Activated CD4-positive, alpha-beta T cell treated with anti-CD3 and anti-CD28 coated beads for 36 hours (primary cell): ENCODE measurements at regions of chrX and their contacts with region 1.

Region 1: GRCh38 chrX:45769761-45770582 is 569.3 kb upstream of the DIPK2B start:
- DNase-seq: peak; percentile 60
- ATAC-seq: peak; percentile 63
- H3K4me3 Mint-ChIP-seq: peak overlapping the region; percentile 77
- H3K27ac Mint-ChIP-seq: peak overlapping the region; percentile 98
- H3K4me1 Mint-ChIP-seq: peaks cover 53% of the 10 kb centered on the region
- H3K27me3 Mint-ChIP-seq: no peaks in the 10 kb centered on the region

Region 2: DNA sequence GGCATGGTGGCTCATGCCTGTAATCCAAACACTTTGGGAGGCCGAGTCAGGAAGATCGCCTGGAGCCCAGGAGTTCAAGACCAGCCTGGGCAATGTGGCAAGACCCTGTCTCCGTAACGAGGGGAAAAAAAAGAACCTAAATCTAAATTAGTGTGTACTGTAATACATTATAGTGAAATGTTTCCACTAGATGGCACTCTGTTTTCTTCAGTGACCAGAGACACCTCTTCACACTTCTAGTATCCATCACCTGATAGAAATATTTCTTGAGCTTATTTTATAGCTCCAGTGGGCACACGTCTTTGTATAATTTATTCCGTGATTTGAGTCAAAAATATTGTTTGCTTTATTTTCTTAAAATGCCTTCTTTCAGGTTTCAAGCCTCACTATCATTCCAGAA is 31.6 kb after region 1 on chrX:
- CTCF ChIA-PET with region 1: interaction called, 25 read pairs
- POLR2A ChIA-PET with region 1: interaction called, 9 read pairs
- intact Hi-C with region 1: loop called in 1 of 2 experiments (anchors 2 kb)
- DNase-seq: no peak
- ATAC-seq: peak; percentile 55
- H3K4me3 Mint-ChIP-seq: peak overlapping the region; percentile 63
- H3K27ac Mint-ChIP-seq: peak overlapping the region; percentile 92
- H3K4me1 Mint-ChIP-seq: peaks cover 71% of the 10 kb centered on the region
- H3K27me3 Mint-ChIP-seq: no peaks in the 10 kb centered on the region